ENCODE measurements at regions of chr1 and their contacts with region 1.

Region 1: GRCh38 chr1:33086384-33086850 is 5.5 kb downstream of the AZIN2 start:
- DNase-seq: peak; percentile 73
- H3K4me3 Mint-ChIP-seq: no peak overlapping the region
- H3K27ac Mint-ChIP-seq: no peak overlapping the region
- H3K4me1 Mint-ChIP-seq: no peaks in the 10 kb centered on the region
- H3K27me3 Mint-ChIP-seq: peaks cover 18% of the 10 kb centered on the region
- CTCF ChIP-seq: peak; percentile 60

Region 2: DNA sequence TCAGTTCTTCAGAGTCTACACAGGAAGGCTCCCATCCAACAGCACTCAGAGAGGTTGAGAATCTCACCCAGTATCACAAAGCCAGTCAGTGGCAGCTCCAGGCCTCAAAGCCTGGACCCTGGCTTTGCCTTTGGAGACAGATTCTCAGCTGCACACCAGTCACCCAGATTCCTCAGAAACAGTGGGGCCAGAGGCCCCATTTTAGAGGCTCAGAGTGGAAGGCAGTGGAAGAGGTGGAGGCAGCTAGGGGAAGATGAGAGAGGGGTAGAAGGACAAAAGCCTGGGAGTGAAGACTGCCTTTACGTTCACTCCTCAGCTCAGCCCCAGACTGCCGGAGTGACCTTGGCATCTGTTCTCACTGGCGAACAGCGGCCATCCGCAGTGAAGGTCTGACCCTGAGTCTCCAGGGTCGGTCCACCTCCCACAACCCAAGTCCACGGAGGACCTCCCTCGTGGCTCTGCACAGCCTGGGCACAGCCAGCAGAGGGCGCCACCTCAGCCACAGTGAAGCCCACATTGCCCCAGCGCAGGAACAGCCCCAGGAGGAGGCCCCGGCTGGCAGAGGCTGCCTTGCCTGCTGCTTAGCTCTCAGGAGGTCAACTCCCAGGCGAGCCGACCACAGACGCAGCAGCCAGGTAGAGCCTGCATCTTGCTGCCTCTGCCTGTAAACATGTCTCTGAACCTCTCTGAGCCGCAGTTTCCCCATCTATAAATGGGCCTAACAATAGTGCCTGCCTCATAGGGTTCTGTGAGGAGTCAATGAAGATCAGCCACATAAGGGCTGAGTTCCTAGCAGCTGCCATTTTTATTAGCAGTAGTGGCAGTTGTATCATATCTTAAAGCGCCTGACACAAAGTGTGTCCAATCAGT is 209.8 kb before region 1 on chr1:
- CTCF ChIA-PET with region 1: interaction called, 6 read pairs
- intact Hi-C with region 1: loop called (anchors 1 kb)
- DNase-seq: peak; percentile 73
- H3K4me3 Mint-ChIP-seq: no peak overlapping the region
- H3K27ac Mint-ChIP-seq: no peak overlapping the region
- H3K4me1 Mint-ChIP-seq: peaks cover 31% of the 10 kb centered on the region
- H3K27me3 Mint-ChIP-seq: peaks cover 52% of the 10 kb centered on the region
- CTCF ChIP-seq: peak; percentile 87

Measured in Calu3 (cell line).